GM12878 (cell line): ENCODE measurements at regions of chr22 and their contacts with region 1.

Region 1: GRCh38 chr22:45994491-45995404 is 17.8 kb upstream of the WNT7B start:
- DNase-seq: no peak
- ATAC-seq: peak; percentile 73
- H3K4me3 ChIP-seq: no peak overlapping the region
- H3K27ac ChIP-seq: no peak overlapping the region
- H3K4me1 ChIP-seq: peaks cover 11% of the 10 kb centered on the region
- H3K27me3 ChIP-seq: peaks cover 0 to 3% of the 10 kb centered on the region in 2 experiments; a peak in 1 of 4 replicates
- CTCF ChIP-seq: peak; percentile 97 to 98 (median 97)
- EP300 ChIP-seq: no peak
- POLR2A ChIP-seq: no peak
- RAD21 ChIP-seq: peak; percentile 95

Region 2: DNA sequence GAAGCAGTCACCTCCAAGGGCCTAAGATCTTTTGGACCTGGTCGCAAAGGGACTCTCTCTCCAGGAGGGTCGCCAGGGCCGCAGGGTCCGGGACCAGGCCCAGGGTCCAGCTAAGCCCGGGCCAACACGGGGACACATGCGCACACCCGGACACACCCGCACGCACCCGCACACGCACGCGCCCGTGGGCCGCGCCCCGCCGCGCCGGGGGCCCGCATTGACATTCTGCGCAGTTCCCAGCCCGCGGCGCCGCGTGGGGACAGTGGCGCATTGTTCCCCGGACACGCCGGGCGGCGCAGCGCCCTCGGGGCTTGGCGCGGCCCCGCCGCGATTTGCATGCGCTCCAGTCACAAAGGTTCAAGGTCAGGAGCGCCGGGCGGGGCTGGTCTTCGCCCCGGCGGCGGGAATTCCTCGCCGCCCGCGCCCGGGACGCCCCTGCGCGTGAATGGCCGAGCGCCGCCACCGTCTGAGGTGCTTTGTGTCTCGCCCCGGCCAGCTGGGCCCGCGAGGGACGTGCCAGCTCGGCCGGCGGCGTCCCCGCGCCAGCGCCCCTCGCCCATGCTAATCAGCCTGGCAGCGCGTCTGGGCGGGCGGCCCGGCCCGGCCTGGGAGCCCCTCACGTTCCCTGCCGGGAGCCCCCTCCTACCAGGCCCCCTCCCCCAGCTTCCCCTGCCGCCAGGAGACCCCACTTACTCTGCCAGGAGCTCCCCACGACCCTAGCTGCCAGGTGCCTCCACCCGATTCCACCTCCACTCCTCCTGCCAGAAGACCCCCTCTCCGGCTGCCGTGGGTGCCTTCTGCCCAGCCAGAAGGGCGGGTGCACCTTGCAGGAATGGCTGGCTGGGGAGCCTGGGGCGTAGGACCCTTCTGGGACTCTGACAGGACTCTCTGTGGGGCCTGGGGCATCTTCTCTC is 32.7 kb after region 1 on chr22:
- CTCF ChIA-PET with region 1: no interaction called
- POLR2A ChIA-PET with region 1: no interaction called
- RAD21 ChIA-PET with region 1: no interaction called
- SMC1A ChIA-PET with region 1: no interaction called
- in situ Hi-C with region 1: no loop called
- intact Hi-C with region 1: no loop called
- DNase-seq: no peak
- ATAC-seq: no peak
- H3K4me3 ChIP-seq: no peak overlapping the region
- H3K27ac ChIP-seq: no peak overlapping the region
- H3K4me1 ChIP-seq: no peaks in the 10 kb centered on the region
- H3K27me3 ChIP-seq: peaks cover 9% of the 10 kb centered on the region in 2 experiments; a peak in 3 of 4 replicates
- CTCF ChIP-seq: no peak
- EP300 ChIP-seq: no peak
- POLR2A ChIP-seq: no peak
- RAD21 ChIP-seq: no peak

Region 3: DNA sequence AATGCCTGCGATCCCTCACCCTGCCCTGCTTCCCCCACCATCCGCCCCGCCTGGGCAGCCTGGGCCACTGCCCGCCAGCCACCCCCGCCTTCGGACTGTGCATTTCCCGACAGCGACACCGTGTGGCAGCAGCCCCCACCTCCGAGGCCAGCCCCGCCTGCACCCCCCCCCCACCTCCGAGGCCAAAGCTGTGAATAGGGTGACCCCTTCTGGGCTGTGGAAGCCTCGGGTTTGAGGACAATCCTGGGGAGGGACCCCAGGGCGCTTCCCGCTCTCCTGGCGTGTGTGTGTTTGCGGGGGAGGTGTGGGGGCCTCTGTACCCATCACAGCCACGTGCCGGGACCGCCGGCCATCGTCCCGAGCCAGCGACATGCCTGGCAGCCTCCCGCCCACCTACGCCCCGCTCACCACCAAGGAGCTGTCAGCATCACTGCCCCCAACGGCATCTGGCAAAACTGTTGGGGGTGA is 121.8 kb after region 1 on chr22:
- CTCF ChIA-PET with region 1: interaction called, 24 read pairs
- POLR2A ChIA-PET with region 1: no interaction called
- RAD21 ChIA-PET with region 1: interaction called, 15 read pairs
- SMC1A ChIA-PET with region 1: interaction called, 7 read pairs
- in situ Hi-C with region 1: no loop called
- intact Hi-C with region 1: no loop called
- DNase-seq: peak; percentile 16
- ATAC-seq: peak; percentile 97
- H3K4me3 ChIP-seq: no peak overlapping the region
- H3K27ac ChIP-seq: no peak overlapping the region
- H3K4me1 ChIP-seq: no peaks in the 10 kb centered on the region
- H3K27me3 ChIP-seq: no peaks in the 10 kb centered on the region; a peak in 1 of 4 replicates
- CTCF ChIP-seq: peak; percentile 90 to 98 (median 94)
- EP300 ChIP-seq: no peak
- POLR2A ChIP-seq: no peak
- RAD21 ChIP-seq: peak; percentile 98

Region 4: DNA sequence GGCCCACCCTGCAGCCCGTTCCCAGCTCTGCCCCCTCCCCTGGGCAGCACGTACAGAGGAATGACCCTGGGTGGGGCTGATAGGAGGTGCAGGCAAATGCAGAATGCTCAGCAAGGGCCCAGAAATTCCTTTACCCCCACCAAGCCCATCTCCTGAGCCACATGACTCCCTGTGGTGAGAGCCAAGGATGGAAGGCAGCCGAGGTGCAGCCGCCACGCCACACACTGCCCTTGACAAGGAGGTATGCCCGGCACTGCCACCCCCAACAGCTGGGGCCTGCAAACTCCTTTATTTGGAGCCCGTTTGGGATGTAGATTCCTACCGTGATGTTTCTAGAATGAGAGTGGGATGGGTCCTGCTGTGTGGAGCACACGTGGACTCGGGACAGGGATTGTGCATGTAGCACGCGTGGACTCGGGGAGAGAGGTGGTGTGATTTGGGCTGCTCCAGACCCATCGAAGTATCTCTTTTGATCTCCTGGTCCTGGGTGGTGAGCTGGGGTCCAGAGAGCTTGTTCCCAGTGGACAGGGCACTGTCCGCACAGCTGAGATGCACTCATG is 314.9 kb after region 1 on chr22:
- CTCF ChIA-PET with region 1: no interaction called
- POLR2A ChIA-PET with region 1: no interaction called
- RAD21 ChIA-PET with region 1: no interaction called
- SMC1A ChIA-PET with region 1: no interaction called
- in situ Hi-C with region 1: no loop called
- intact Hi-C with region 1: loop called (anchors 10 kb)
- DNase-seq: no peak
- ATAC-seq: no peak
- H3K4me3 ChIP-seq: no peak overlapping the region
- H3K27ac ChIP-seq: no peak overlapping the region
- H3K4me1 ChIP-seq: no peaks in the 10 kb centered on the region
- H3K27me3 ChIP-seq: no peaks in the 10 kb centered on the region
- CTCF ChIP-seq: no peak
- EP300 ChIP-seq: no peak
- POLR2A ChIP-seq: no peak
- RAD21 ChIP-seq: no peak

Region 5: GRCh38 chr22:46862421-46863324 is 867.9 kb after region 1 on chr22:
- CTCF ChIA-PET with region 1: no interaction called
- POLR2A ChIA-PET with region 1: no interaction called
- RAD21 ChIA-PET with region 1: no interaction called
- SMC1A ChIA-PET with region 1: no interaction called
- in situ Hi-C with region 1: no loop called
- intact Hi-C with region 1: no loop called
- DNase-seq: peak; percentile 7
- ATAC-seq: peak; percentile 96
- H3K4me3 ChIP-seq: no peak overlapping the region
- H3K27ac ChIP-seq: no peak overlapping the region
- H3K4me1 ChIP-seq: no peaks in the 10 kb centered on the region; the same call in 1 of the 2 replicates
- H3K27me3 ChIP-seq: no peaks in the 10 kb centered on the region
- CTCF ChIP-seq: no peak
- EP300 ChIP-seq: no peak
- POLR2A ChIP-seq: no peak
- RAD21 ChIP-seq: no peak